Left ventricle myocardium inferior (tissue), 1 donor: ENCODE measurements at regions of chr12 and their contacts with region 1.

Region 1: GRCh38 chr12:546921-547845 is 87.4 kb downstream of the B4GALNT3 start:
- DNase-seq: peak; percentile 62
- H3K4me3 ChIP-seq: no peak overlapping the region
- H3K27ac ChIP-seq: peak overlapping the region; percentile 89
- H3K4me1 ChIP-seq: peaks cover 65% of the 10 kb centered on the region
- H3K27me3 ChIP-seq: peaks cover 14% of the 10 kb centered on the region
- CTCF ChIP-seq: peak; percentile 99

Region 2: GRCh38 chr12:449203-449602 is 98.0 kb before region 1 on chr12:
- intact Hi-C with region 1: loop called (anchors 5 kb)
- DNase-seq: no peak
- H3K4me3 ChIP-seq: no peak overlapping the region
- H3K27ac ChIP-seq: no peak overlapping the region
- H3K4me1 ChIP-seq: peaks cover 14% of the 10 kb centered on the region
- H3K27me3 ChIP-seq: peaks cover 4% of the 10 kb centered on the region
- CTCF ChIP-seq: no peak